Activated CD4-positive, alpha-beta T cell treated with anti-CD3 and anti-CD28 coated beads for 36 hours (primary cell): ENCODE measurements at regions of chr4 and their contacts with region 1.

Region 1: GRCh38 chr4:38509551-38509950 is 154.4 kb upstream of the KLF3 start:
- DNase-seq: peak; percentile 37
- ATAC-seq: peak; percentile 85
- H3K4me3 Mint-ChIP-seq: peak overlapping the region; percentile 6
- H3K27ac Mint-ChIP-seq: peak overlapping the region; percentile 82
- H3K4me1 Mint-ChIP-seq: peaks cover 82% of the 10 kb centered on the region
- H3K27me3 Mint-ChIP-seq: peaks cover 5% of the 10 kb centered on the region

Region 2: GRCh38 chr4:38328989-38329729 is 180.4 kb before region 1 on chr4:
- CTCF ChIA-PET with region 1: no interaction called
- POLR2A ChIA-PET with region 1: no interaction called
- intact Hi-C with region 1: loop called in 1 of 2 experiments (anchors 5 kb)
- DNase-seq: peak; percentile 25
- ATAC-seq: peak; percentile 65
- H3K4me3 Mint-ChIP-seq: no peak overlapping the region
- H3K27ac Mint-ChIP-seq: no peak overlapping the region
- H3K4me1 Mint-ChIP-seq: peaks cover 68% of the 10 kb centered on the region
- H3K27me3 Mint-ChIP-seq: peaks cover 20% of the 10 kb centered on the region